Kidney (tissue), 22 donors: ENCODE measurements at regions of chr12 and their contacts with region 1.

Region 1: GRCh38 chr12:47032644-47033043 is 46.8 kb upstream of the PCED1B start:
- DNase-seq: peak in 2 of 5 donors; percentile 76
- H3K4me3 ChIP-seq: no peak overlapping the region
- H3K27ac ChIP-seq: no peak overlapping the region
- H3K4me1 ChIP-seq: peaks cover 0 to 8% (median 5%) of the 10 kb centered on the region in 3 donors
- H3K27me3 ChIP-seq: no peaks in the 10 kb centered on the region
- CTCF ChIP-seq: peak; percentile 59

Region 2: DNA sequence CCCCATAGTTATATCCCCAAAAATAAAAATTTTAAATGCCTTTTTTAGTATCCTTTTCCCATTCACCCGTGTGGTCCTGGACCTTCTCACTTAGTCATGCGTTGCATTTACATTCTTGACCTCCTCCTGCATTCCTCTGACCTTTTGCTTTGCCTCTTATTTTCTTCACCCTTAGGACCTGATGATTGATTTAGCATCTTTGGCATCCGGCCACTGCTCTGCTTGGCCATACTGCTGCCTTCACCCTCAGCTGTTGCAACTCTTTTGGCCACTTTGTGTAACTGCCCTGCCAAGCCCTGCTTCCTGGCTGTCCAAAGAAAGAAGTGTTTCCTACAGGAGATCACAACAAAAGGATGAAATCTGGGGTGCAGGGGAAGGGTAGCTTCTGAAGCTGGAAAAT is 158.0 kb before region 1 on chr12:
- intact Hi-C with region 1: no loop called
- DNase-seq: no peak
- H3K4me3 ChIP-seq: no peak overlapping the region
- H3K27ac ChIP-seq: no peak overlapping the region
- H3K4me1 ChIP-seq: no peaks in the 10 kb centered on the region
- H3K27me3 ChIP-seq: no peaks in the 10 kb centered on the region
- CTCF ChIP-seq: no peak

Region 3: DNA sequence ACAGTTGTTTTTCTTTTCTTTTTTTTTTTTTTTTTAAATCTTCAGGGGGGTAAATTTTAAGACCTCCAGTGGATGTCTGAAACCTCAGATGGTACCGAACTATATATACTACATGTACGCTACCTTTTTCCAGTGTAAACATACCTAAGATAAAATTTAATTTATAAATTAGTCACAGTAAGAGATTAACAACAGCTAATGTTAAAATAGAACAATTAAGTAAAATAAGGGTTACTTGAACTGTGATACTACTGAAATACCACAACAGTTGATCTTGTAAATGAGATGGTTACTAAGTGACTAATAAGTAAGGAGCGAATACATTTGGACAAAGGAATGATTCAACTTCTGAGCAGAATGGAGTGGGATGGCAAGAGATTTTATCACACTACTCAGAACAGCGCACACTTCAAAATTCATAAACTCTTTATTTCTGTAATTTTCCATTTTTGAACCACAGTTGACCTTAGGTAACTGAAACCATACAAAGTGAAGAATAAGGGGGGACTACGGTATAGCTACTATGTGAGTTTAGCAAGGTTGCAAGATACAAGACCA is 33.8 kb before region 1 on chr12:
- intact Hi-C with region 1: no loop called
- DNase-seq: no peak
- H3K4me3 ChIP-seq: no peak overlapping the region
- H3K27ac ChIP-seq: no peak overlapping the region
- H3K4me1 ChIP-seq: no peaks in the 10 kb centered on the region
- H3K27me3 ChIP-seq: no peaks in the 10 kb centered on the region
- CTCF ChIP-seq: no peak

Region 4: DNA sequence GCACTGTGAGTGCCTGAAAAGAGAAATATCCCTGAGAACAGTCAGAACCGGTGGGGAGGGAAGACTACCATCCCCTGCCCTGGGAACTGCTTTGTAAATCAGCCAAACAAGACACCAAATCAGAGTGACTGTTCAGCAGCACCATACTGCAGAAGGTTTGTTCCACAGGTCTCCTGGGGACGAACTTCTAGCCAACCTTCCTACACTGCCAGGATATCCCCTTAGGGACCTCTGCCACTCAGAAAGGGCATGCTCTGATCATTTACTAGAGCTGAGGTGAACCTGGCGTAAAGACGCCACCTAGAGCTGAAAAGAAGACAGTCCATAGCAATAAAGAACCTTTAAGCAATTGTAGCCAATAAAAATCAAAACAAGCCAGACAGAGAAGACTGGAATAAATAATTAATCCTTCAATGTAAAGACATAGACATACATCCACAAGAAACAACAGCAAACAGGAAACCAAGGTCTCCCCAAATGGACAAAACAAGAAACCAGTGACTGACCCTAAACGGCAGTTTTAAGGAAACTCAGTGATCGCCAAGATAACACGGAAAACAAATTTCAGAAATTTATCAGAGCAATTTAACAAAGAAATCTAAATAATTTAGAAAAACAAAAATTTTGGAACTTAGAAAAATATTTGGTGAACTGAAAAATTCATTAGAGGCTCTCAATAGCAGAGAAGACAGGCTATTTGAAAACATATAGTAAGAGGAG is 275.2 kb after region 1 on chr12:
- intact Hi-C with region 1: loop called (anchors 10 kb)
- DNase-seq: peak in 3 of 5 donors; percentile 20 to 56 (median 41)
- H3K4me3 ChIP-seq: no peak overlapping the region
- H3K27ac ChIP-seq: no peak overlapping the region
- H3K4me1 ChIP-seq: no peaks in the 10 kb centered on the region
- H3K27me3 ChIP-seq: no peaks in the 10 kb centered on the region
- CTCF ChIP-seq: peak; percentile 63

Region 5: DNA sequence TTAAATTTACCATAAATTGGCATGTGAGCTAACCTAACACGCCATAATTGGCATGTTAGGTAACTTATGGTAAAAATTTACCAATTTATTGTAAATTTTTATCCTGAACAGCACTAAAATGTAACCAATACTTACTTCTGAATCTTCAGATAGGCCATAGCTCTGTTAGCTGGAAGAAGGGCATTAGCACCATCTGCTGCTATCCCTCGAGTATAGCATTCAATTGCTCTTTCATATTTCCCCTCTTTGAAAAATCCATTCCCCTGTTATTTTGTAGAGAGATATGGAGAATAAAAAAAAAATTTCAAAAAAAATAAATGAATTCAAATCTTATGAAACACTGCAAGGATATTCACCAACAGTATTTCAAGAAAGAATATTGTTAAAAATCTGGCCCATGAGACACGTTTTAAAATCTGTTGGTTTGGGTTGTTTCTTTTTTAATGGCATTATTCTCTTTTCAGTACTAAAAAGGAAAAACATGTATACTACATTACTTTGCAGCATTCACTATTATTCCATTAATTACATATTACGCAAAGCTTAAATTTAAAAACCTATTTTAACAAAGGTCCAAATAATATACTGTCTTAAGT is 654.1 kb after region 1 on chr12:
- intact Hi-C with region 1: loop called (anchors 10 kb)
- DNase-seq: peak in 3 of 5 donors; percentile 12 to 44 (median 34)
- H3K4me3 ChIP-seq: no peak overlapping the region
- H3K27ac ChIP-seq: no peak overlapping the region
- H3K4me1 ChIP-seq: no peaks in the 10 kb centered on the region
- H3K27me3 ChIP-seq: no peaks in the 10 kb centered on the region
- CTCF ChIP-seq: peak; percentile 53